Activated CD4-positive, alpha-beta T cell treated with anti-CD3 and anti-CD28 coated beads for 36 hours (primary cell): ENCODE measurements at regions of chr9 and their contacts with region 1.

Region 1: GRCh38 chr9:125143375-125144090 is at the start of gene SCAI:
- DNase-seq: peak; percentile 99
- ATAC-seq: peak; percentile 100
- H3K4me3 Mint-ChIP-seq: peak within 1 kb of the TSS; percentile 83
- H3K27ac Mint-ChIP-seq: peak within 1 kb of the TSS; percentile 69
- H3K4me1 Mint-ChIP-seq: peaks cover 35% of the 10 kb centered on the region
- H3K27me3 Mint-ChIP-seq: no peaks in the 10 kb centered on the region
- total RNA-seq, gene SCAI: 13.0 to 13.8 TPM

Region 2: DNA sequence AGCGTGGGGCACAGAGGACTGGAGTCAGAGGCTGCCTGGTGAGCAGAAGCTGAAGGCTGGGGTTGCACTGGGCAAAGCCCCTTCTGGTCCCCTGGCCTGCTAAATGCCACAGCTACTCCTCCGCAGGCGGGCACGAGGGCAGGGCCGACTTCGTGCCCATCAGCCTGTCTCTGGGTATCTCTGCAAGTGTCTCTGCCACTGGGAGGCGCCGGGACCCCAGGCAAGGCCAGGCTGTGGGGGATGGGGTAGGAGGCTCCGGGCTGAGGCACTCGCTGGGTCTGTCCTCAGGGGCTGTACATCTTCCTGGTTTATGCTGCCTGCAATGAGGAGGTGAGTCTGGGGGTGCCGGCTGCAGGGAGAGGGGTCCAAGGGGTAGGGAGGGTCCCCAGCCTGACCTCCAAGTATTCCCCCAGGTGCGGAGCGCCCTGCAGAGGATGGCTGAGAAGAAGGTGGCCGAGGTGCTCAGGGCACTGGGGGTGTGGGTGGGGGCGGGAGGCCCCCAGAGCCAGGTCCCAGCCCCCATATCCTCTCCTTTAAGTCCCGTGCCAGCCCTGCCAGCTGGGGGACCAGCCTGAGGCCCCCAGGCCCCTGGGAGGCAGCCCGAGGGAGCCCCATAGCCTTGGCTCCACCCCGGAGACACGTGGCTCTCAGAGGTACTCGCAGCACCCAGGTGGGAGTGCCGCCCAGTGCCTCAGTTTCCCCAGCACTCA is 668.2 kb before region 1 on chr9:
- CTCF ChIA-PET with region 1: no interaction called
- POLR2A ChIA-PET with region 1: no interaction called
- intact Hi-C with region 1: no loop called
- DNase-seq: peak; percentile 26
- ATAC-seq: no peak
- H3K4me3 Mint-ChIP-seq: no peak overlapping the region
- H3K27ac Mint-ChIP-seq: no peak overlapping the region
- H3K4me1 Mint-ChIP-seq: no peaks in the 10 kb centered on the region
- H3K27me3 Mint-ChIP-seq: peaks cover 16% of the 10 kb centered on the region

Region 3: GRCh38 chr9:124868511-124869465 is 274.7 kb before region 1 on chr9:
- CTCF ChIA-PET with region 1: interaction called, 3 read pairs
- POLR2A ChIA-PET with region 1: no interaction called
- intact Hi-C with region 1: loop called (anchors 1 to 5 kb)
- DNase-seq: peak; percentile 96
- ATAC-seq: peak; percentile 59
- H3K4me3 Mint-ChIP-seq: peak overlapping the region; percentile 98
- H3K27ac Mint-ChIP-seq: peak overlapping the region; percentile 98
- H3K4me1 Mint-ChIP-seq: peaks cover 42% of the 10 kb centered on the region
- H3K27me3 Mint-ChIP-seq: no peaks in the 10 kb centered on the region

Region 4: DNA sequence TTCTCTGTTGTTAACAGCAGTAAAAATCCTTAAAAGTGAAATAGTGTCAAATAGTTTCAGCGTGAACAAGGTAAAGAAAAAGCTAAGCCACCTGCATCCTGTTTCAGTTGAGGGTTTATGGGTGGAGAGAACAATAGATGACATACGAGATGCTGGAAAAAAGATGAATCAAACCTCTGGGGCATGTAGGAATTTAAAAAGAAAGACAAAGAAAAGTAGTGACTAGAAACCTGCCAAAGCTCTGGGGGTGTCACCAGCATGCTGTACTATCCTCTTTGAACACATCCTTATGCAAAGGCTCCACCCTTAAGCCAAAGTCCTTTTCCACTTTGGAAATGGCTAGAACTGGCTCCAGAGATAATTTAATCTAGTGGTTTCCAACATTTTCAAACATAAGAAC is 22.4 kb before region 1 on chr9:
- CTCF ChIA-PET with region 1: interaction called, 6 read pairs
- POLR2A ChIA-PET with region 1: no interaction called
- intact Hi-C with region 1: loop called (anchors 1 kb)
- DNase-seq: peak; percentile 19
- ATAC-seq: peak; percentile 31
- H3K4me3 Mint-ChIP-seq: no peak overlapping the region
- H3K27ac Mint-ChIP-seq: peak overlapping the region; percentile 23
- H3K4me1 Mint-ChIP-seq: peaks cover 48% of the 10 kb centered on the region
- H3K27me3 Mint-ChIP-seq: no peaks in the 10 kb centered on the region

Region 5: GRCh38 chr9:125189361-125190289 is 46.1 kb after region 1 on chr9 and contains the start of gene PPP6C:
- CTCF ChIA-PET with region 1: no interaction called
- POLR2A ChIA-PET with region 1: interaction called, 6 read pairs
- intact Hi-C with region 1: loop called in 1 of 2 experiments (anchors 1 kb)
- DNase-seq: peak; percentile 99
- ATAC-seq: peak; percentile 96
- H3K4me3 Mint-ChIP-seq: peak within 1 kb of the TSS; percentile 83
- H3K27ac Mint-ChIP-seq: peak within 1 kb of the TSS; percentile 86
- H3K4me1 Mint-ChIP-seq: peaks cover 69% of the 10 kb centered on the region
- H3K27me3 Mint-ChIP-seq: no peaks in the 10 kb centered on the region
- total RNA-seq, gene PPP6C: 35.1 to 47.3 TPM

Region 6: DNA sequence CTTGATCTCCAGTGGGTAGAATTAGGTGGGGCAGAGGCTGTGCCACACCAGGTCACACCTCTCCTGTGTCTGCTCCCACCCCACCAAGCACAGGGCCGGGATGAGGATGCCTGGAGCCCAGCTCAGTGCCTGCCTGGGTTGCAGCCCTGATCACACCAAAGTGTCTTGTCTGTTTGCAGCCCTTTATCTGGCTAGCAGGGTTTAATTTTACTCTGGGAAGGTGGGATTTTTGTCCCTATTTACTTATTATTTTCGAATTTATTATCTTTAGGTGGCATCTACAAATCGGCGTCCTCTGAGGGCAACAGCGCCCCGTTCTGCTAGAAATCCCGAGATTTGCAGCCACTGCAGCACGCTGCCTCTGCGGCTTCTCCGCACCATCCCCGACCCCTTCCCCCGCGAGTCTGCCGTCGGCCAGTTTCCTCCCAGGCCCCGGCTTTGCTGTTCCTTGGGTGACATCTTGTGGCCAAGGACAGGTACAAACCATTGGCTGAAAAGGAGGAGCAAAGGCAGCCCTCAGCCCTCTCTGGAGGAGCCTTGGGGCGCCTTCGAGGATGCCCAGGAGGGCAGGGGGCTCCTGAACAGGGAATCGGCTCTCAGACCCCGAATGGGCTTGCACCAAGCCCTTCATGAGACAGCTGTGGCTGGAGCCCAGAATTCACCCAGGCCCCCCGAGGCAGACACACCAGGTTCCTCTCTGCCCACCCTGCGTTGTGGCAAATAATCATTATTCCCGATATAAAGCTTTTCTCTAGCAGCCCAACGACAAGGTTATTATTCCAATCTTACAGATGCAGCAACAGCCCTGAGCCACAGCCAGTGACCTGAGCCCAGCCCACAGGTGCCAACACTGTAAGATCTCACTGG is 231.1 kb after region 1 on chr9:
- CTCF ChIA-PET with region 1: interaction called, 4 read pairs
- POLR2A ChIA-PET with region 1: no interaction called
- intact Hi-C with region 1: loop called in 1 of 2 experiments (anchors 1 kb)
- DNase-seq: peak; percentile 85
- ATAC-seq: peak; percentile 97
- H3K4me3 Mint-ChIP-seq: peak overlapping the region; percentile 26
- H3K27ac Mint-ChIP-seq: no peak overlapping the region
- H3K4me1 Mint-ChIP-seq: peaks cover 2% of the 10 kb centered on the region
- H3K27me3 Mint-ChIP-seq: no peaks in the 10 kb centered on the region